HCT116 (cell line): ENCODE measurements at regions of chr18 and their contacts with region 1.

Region 1: DNA sequence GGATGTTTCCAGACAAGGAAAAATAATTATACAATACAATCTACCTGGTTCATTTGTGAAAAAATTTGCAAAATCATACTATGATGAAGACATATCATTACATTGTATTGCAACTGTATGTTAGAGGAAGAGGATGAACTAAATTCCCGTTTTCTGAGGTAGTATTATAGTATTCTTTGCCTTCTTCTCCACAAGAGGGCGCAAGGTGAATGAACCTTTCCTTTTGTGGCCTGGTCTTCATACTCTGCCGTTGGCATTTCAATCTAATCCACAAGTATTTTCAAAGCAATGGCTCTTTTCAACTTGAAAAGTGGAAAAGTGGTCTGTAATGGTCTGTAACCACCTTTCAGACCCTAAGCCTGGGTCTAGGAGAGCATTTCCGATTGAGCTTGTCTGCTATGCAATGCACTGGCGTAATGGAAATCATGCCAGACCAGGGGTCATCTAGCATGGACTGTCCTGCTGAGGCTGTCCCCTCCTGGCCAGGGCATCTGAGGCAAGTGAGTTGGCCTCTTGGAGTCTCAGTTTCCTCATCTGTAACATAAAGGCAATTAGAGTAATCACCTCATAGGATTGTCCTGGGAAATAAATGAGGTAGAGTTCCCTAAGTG is 30.8 kb upstream of the ZNF396 start:
- DNase-seq: peak; percentile 63
- ATAC-seq: peak; percentile 92
- H3K4me3 ChIP-seq: no peak overlapping the region
- H3K27ac ChIP-seq: no peak overlapping the region
- H3K4me1 ChIP-seq: peaks cover 0 to 10% of the 10 kb centered on the region in 2 experiments; a peak in 1 of 4 replicates
- H3K27me3 ChIP-seq: no peaks in the 10 kb centered on the region
- CTCF ChIP-seq: peak; percentile 63 to 80 (median 66); a peak in 5 of 6 replicates
- POLR2A ChIP-seq: no peak
- RAD21 ChIP-seq: peak; percentile 91

Region 2: DNA sequence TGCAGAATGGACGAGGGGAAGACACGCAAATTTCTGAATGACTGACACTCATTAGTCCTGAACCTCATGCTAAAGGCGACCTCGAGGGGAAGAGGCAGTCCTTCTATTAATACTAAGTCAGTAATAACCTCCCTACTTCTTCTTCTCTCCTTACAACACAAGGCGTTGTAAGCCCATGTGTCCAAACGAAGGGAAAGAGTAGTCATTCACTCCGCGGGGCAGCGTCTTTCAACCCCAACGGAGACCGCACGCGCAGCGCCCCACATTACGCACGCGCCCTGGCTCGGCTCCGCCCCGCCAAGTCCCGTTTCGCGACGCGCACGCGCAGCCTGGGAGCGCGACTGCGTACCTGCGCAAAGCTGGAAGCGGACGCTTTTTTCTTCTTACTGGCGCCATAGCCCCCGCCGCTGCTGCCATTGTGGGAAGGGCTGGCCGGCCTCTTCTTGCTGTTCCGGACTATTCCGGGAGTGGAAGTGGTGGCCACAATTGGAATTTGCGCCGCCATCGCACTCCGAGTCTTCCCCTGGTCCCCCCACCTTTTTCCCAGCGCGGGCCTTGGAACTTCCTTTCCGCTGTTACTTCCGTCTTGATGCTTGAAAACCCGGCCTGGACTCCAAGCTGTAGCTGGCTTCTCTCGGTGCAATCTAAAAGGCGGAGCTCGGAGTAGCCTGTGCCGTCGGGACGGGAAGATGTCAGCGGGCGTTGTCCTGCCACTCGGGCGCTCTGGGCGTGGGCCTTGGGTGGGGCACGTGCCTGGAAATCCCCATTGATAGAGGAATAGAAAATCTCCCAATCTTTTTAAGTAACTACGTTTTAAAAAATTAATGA is 89.6 kb after region 1 on chr18 and contains the start of gene INO80C:
- CTCF ChIA-PET with region 1: no interaction called
- POLR2A ChIA-PET with region 1: no interaction called
- RAD21 ChIA-PET with region 1: no interaction called
- intact Hi-C with region 1: loop called (anchors 5 kb)
- DNase-seq: peak; percentile 92
- ATAC-seq: peak; percentile 94
- H3K4me3 ChIP-seq: peak within 1 kb of the TSS; percentile 60 to 74
- H3K27ac ChIP-seq: peak within 1 kb of the TSS; percentile 83
- H3K4me1 ChIP-seq: peaks cover 10 to 26% of the 10 kb centered on the region in 2 experiments; a peak in 3 of 4 replicates
- H3K27me3 ChIP-seq: no peaks in the 10 kb centered on the region
- CTCF ChIP-seq: no peak
- POLR2A ChIP-seq: peak; percentile 97
- RAD21 ChIP-seq: peak; percentile 29; the same call in 1 of the 2 replicates
- total RNA-seq, gene INO80C: 30.7 TPM

Region 3: GRCh38 chr18:35580701-35581539 is 172.9 kb after region 1 on chr18:
- CTCF ChIA-PET with region 1: no interaction called
- POLR2A ChIA-PET with region 1: no interaction called
- RAD21 ChIA-PET with region 1: no interaction called
- intact Hi-C with region 1: loop called (anchors 5 kb)
- DNase-seq: no peak
- ATAC-seq: peak; percentile 75
- H3K4me3 ChIP-seq: peak overlapping the region; percentile 47 to 71
- H3K27ac ChIP-seq: peak overlapping the region; percentile 75
- H3K4me1 ChIP-seq: peaks cover 10 to 19% of the 10 kb centered on the region in 2 experiments; a peak in 3 of 4 replicates
- H3K27me3 ChIP-seq: no peaks in the 10 kb centered on the region
- CTCF ChIP-seq: no peak
- POLR2A ChIP-seq: no peak
- RAD21 ChIP-seq: no peak

Region 4: DNA sequence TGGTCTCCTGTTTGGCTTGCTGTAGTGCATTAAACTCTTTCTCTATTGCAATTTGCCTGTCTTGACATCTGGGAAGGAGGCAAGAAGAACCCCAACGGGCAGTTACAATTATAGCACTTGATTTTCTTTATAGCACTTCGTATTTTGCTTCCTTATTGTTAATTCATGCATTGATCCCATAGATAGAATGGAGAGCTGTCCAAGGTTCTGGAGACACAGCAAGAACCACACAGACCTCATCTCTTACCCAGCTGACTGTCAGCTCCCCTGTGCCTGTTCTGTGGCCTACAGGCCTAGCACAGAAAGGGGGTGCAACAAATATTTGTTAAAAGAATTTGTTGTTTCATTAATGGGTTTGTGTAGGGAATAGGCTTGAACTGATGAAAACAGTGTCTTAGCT is 367.9 kb after region 1 on chr18:
- CTCF ChIA-PET with region 1: no interaction called
- POLR2A ChIA-PET with region 1: no interaction called
- RAD21 ChIA-PET with region 1: no interaction called
- intact Hi-C with region 1: loop called (anchors 5 kb)
- DNase-seq: no peak
- ATAC-seq: no peak
- H3K4me3 ChIP-seq: no peak overlapping the region
- H3K27ac ChIP-seq: no peak overlapping the region
- H3K4me1 ChIP-seq: no peaks in the 10 kb centered on the region
- H3K27me3 ChIP-seq: peaks cover 31% of the 10 kb centered on the region
- CTCF ChIP-seq: no peak
- POLR2A ChIP-seq: no peak
- RAD21 ChIP-seq: no peak